Activated naive CD4-positive, alpha-beta T cell treated with anti-CD3 and anti-CD28 coated beads for 36 hours (primary cell): ENCODE measurements at regions of chr9 and their contacts with region 1.

Region 1: DNA sequence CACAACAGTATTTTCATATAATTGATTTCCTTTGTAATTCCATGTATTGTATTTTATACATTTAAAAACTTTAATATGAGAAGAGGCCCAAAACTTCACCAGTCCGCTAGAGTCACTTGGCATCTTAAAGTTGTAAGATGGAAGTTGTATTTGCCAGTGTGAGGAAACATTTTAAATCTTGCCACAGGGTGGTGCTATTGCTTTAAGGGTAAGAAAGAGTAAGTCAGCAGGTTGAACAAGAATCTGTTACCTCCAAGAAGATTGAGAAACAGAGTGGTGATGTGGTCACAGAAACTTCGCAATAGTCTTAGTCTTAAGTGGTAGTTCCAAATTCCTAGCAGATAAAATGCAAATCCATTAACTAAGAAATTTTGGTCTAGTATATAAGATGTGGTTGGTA is 39.8 kb upstream of the RANBP6 start:
- DNase-seq: peak; percentile 65
- H3K4me3 Mint-ChIP-seq: no peak overlapping the region
- H3K27ac Mint-ChIP-seq: no peak overlapping the region
- H3K4me1 Mint-ChIP-seq: peaks cover 7% of the 10 kb centered on the region
- H3K27me3 Mint-ChIP-seq: peaks cover 3% of the 10 kb centered on the region

Region 2: GRCh38 chr9:5799314-5799713 is 255.9 kb before region 1 on chr9:
- CTCF ChIA-PET with region 1: interaction called, 6 read pairs
- intact Hi-C with region 1: loop called (anchors 1 kb)
- DNase-seq: peak; percentile 42
- H3K4me3 Mint-ChIP-seq: no peak overlapping the region
- H3K27ac Mint-ChIP-seq: no peak overlapping the region
- H3K4me1 Mint-ChIP-seq: peaks cover 26% of the 10 kb centered on the region
- H3K27me3 Mint-ChIP-seq: no peaks in the 10 kb centered on the region

Region 3: DNA sequence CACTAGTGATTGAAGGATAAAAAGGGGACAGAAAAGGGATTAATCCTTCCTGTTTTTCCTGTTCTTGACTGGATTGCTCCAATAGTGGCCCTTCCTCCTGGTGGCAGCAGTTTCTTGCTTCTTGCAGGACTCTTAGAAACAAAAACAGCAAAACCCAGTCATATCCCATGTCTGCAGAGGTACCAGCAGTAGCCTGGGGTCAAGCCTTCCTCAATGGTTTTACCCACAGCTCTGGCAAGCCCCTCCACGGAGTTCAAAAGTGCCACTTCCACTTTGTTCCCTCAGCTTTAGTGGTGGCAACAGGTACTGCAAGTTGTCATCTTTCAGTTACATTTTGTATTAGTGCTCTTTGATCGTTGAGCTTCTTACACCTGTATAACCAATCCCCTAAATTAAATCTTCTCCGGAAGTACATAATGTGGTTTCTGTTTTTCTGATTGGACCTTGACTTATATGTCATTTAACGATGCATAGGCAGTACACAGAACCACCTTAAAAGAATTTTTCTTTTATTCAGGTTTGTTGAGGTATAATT is 31.1 kb before region 1 on chr9:
- CTCF ChIA-PET with region 1: interaction called, 13 read pairs
- intact Hi-C with region 1: no loop called
- DNase-seq: peak; percentile 41
- H3K4me3 Mint-ChIP-seq: peak overlapping the region; percentile 56
- H3K27ac Mint-ChIP-seq: no peak overlapping the region
- H3K4me1 Mint-ChIP-seq: peaks cover 3% of the 10 kb centered on the region
- H3K27me3 Mint-ChIP-seq: no peaks in the 10 kb centered on the region

Region 4: GRCh38 chr9:6106576-6107339 is 51.5 kb after region 1 on chr9:
- CTCF ChIA-PET with region 1: interaction called, 13 read pairs
- intact Hi-C with region 1: no loop called
- DNase-seq: peak; percentile 11
- H3K4me3 Mint-ChIP-seq: no peak overlapping the region
- H3K27ac Mint-ChIP-seq: no peak overlapping the region
- H3K4me1 Mint-ChIP-seq: peaks cover 24% of the 10 kb centered on the region
- H3K27me3 Mint-ChIP-seq: no peaks in the 10 kb centered on the region

Region 5: DNA sequence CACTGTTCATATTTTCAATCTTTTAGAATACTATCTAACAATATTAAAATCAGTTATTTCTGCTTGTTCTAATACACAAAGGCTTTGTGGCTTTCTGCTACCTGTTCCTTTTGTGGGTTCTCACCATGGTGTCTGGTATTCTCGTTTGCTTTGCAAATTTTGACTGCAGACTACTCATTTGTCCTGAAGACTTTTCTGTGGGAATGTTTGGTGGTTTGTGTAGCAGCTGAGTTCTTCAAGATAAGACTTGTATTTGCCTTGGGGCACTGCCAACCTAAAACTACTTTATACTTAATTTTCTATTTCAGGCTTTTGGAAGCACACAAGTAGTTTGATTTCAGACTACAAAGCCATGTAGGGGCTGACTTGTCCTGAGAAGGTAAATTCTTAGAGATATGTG is 171.5 kb after region 1 on chr9:
- CTCF ChIA-PET with region 1: no interaction called
- intact Hi-C with region 1: no loop called
- DNase-seq: no peak
- H3K4me3 Mint-ChIP-seq: no peak overlapping the region
- H3K27ac Mint-ChIP-seq: no peak overlapping the region
- H3K4me1 Mint-ChIP-seq: no peaks in the 10 kb centered on the region
- H3K27me3 Mint-ChIP-seq: peaks cover 11% of the 10 kb centered on the region

Region 6: GRCh38 chr9:6353851-6354686 is 298.9 kb after region 1 on chr9:
- CTCF ChIA-PET with region 1: interaction called, 6 read pairs
- intact Hi-C with region 1: loop called (anchors 1 kb)
- DNase-seq: peak; percentile 16
- H3K4me3 Mint-ChIP-seq: no peak overlapping the region
- H3K27ac Mint-ChIP-seq: no peak overlapping the region
- H3K4me1 Mint-ChIP-seq: peaks cover 10% of the 10 kb centered on the region
- H3K27me3 Mint-ChIP-seq: peaks cover 5% of the 10 kb centered on the region

Region 7: DNA sequence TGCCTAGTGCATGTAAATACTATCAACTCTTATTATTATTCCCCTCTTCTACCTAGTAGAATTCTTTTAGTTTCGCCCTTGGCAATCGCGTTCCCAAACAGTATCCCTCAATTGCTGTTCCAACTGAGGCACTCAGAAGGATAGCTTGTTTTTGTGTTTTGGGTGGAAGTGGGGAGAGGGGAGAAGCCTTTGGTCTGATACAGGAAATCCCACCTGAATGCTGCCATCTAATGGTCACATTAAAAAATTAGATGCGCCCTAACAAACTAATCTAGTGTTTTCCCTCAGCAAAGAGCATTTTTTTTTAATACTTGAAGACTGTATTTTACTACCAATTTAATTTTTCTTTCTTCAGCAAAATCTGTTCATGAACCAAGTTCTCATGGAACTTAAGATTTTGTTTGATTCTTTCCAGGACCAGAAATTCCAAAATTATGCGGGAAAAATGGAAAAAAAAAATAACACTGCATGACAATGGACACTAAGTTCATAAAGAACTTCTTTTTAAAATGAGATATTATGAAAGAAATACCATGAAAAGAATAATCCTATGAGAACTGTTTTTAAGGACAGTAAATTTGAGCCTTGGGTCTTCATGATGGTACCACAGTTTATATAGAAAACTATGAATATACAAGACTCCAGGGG is 612.5 kb after region 1 on chr9:
- CTCF ChIA-PET with region 1: no interaction called
- intact Hi-C with region 1: loop called (anchors 1 kb)
- DNase-seq: no peak
- H3K4me3 Mint-ChIP-seq: no peak overlapping the region
- H3K27ac Mint-ChIP-seq: no peak overlapping the region
- H3K4me1 Mint-ChIP-seq: peaks cover 2% of the 10 kb centered on the region
- H3K27me3 Mint-ChIP-seq: no peaks in the 10 kb centered on the region